Esophagus muscularis mucosa (tissue), 4 donors: ENCODE measurements at regions of chr4 and their contacts with region 1.

Region 1: GRCh38 chr4:56907489-56908205 is at the start of gene REST:
- DNase-seq: peak; percentile 93
- H3K4me3 ChIP-seq: peak within 1 kb of the TSS; percentile 88 to 98 (median 94)
- H3K27ac ChIP-seq: peak within 1 kb of the TSS; percentile 93 to 97 (median 94)
- H3K4me1 ChIP-seq: peaks cover 26 to 41% (median 40%) of the 10 kb centered on the region in 4 donors
- H3K27me3 ChIP-seq: no peaks in the 10 kb centered on the region
- CTCF ChIP-seq: no peak
- EP300 ChIP-seq: no peak
- POLR2A ChIP-seq: no peak
- total RNA-seq, gene REST: 24.0 to 37.6 (median 30.1) TPM

Region 2: DNA sequence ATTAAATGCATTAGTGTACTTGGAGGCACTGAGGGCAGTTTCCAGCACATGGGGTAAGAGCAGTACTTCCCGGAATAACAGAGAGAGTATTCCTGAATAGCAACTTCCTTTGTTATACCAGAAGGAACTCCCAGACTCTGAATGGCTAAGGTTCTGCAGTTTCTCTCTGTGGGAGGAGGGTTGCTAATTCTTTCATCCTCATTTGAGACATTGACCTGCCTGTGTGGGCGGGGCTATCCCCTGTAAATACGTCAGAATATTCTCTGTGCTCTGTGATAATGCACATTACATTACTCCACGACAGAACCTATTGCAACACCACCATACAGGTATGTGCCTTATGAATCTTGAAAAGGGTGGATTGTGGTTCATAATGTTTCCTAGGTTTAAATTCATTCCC is 138.9 kb before region 1 on chr4:
- intact Hi-C with region 1: no loop called
- DNase-seq: no peak
- H3K4me3 ChIP-seq: no peak overlapping the region
- H3K27ac ChIP-seq: no peak overlapping the region
- H3K4me1 ChIP-seq: no peaks in the 10 kb centered on the region
- H3K27me3 ChIP-seq: no peaks in the 10 kb centered on the region
- CTCF ChIP-seq: no peak
- EP300 ChIP-seq: no peak
- POLR2A ChIP-seq: no peak

Region 3: GRCh38 chr4:56958111-56958517 is 50.5 kb after region 1 on chr4:
- intact Hi-C with region 1: loop called (anchors 5 kb)
- DNase-seq: peak; percentile 95
- H3K4me3 ChIP-seq: peak overlapping the region in 3 of 4 donors; percentile 17 to 36 (median 18)
- H3K27ac ChIP-seq: peak overlapping the region; percentile 4 to 58 (median 46)
- H3K4me1 ChIP-seq: peaks cover 0 to 10% (median 6%) of the 10 kb centered on the region in 4 donors
- H3K27me3 ChIP-seq: no peaks in the 10 kb centered on the region
- CTCF ChIP-seq: no peak
- EP300 ChIP-seq: no peak
- POLR2A ChIP-seq: no peak

Region 4: DNA sequence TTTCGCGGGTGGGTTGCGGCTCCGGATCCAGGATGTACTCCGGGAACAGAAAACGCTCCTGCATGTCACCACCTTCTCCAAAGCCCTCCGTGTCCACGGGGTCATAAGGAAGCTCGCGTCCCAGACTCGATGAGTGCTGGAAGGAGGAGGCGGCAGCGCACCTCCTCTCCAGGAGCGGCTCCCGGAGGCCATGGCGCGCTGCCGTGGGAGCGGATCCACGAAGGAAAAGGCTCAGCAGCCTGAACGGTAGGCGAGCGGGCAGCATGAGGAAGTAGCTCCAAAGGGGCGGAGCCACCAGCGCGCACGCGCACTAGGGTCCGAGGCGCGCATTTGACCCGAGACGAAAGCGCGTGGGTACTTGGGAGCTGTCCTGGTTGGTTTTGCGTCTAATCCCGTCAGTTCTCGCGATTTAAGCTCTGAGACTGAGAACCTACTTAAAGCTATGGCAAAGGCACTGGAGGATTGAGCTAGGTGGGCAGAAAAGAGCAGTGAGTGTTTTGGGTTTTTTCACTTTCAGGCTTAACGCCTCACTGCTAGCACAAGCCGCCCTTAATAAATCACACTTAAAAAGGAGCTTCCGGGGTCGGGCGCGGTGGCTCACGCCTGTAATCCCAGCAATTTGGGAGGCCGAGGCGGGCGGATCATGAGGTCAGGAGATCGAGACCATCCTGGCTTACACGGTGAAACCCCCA is 69.8 kb after region 1 on chr4 and contains the start of gene NOA1:
- intact Hi-C with region 1: loop called (anchors 2 kb)
- DNase-seq: peak; percentile 99
- H3K4me3 ChIP-seq: peak within 1 kb of the TSS; percentile 79 to 99 (median 92)
- H3K27ac ChIP-seq: peak within 1 kb of the TSS; percentile 90 to 94 (median 92)
- H3K4me1 ChIP-seq: peaks cover 46 to 67% (median 63%) of the 10 kb centered on the region in 4 donors
- H3K27me3 ChIP-seq: no peaks in the 10 kb centered on the region
- CTCF ChIP-seq: no peak
- EP300 ChIP-seq: no peak
- POLR2A ChIP-seq: no peak
- total RNA-seq, gene NOA1: 17.4 to 29.7 (median 23.3) TPM